Activated CD8-positive, alpha-beta T cell treated with anti-CD3 and anti-CD28 coated beads, Interleukin-2, amount 10 ng/mL, durations not matched to agents 7 days and 5 days (primary cell): ENCODE measurements at regions of chr17 and their contacts with region 1.

Region 1: GRCh38 chr17:32877164-32877764 is 340 bp upstream of the MYO1D start:
- DNase-seq: peak; percentile 92
- ATAC-seq: peak; percentile 97
- H3K4me3 Mint-ChIP-seq: peak overlapping the region; percentile 66
- H3K27ac Mint-ChIP-seq: peak overlapping the region; percentile 78
- H3K4me1 Mint-ChIP-seq: peaks cover 14% of the 10 kb centered on the region
- H3K27me3 Mint-ChIP-seq: peaks cover 41% of the 10 kb centered on the region

Region 2: DNA sequence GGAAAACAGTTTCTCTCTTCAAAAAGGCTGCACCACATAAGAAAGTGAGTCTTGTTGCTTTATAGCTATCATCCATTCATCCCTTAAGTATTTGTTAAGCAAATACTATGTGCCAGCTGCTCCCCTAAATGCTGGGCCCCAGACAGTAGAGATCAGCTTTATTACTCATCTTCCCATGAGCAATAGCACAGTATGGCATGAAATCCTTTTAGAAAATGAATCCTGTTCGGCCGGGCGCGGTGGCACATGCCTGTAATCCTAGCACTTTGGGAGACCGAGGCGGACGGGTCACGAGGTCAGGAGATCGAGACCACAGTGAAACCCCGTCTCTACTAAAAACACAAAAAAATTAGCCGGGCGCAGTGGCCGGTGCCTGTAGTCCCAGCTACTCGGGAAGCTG is 99.8 kb before region 1 on chr17:
- CTCF ChIA-PET with region 1: interaction called, 119 read pairs
- POLR2A ChIA-PET with region 1: no interaction called
- DNase-seq: no peak
- ATAC-seq: no peak
- H3K4me3 Mint-ChIP-seq: no peak overlapping the region
- H3K27ac Mint-ChIP-seq: no peak overlapping the region
- H3K4me1 Mint-ChIP-seq: no peaks in the 10 kb centered on the region
- H3K27me3 Mint-ChIP-seq: no peaks in the 10 kb centered on the region

Region 3: GRCh38 chr17:32801193-32801592 is 76.1 kb before region 1 on chr17:
- CTCF ChIA-PET with region 1: interaction called, 14 read pairs
- POLR2A ChIA-PET with region 1: no interaction called
- DNase-seq: no peak
- ATAC-seq: no peak
- H3K4me3 Mint-ChIP-seq: no peak overlapping the region
- H3K27ac Mint-ChIP-seq: no peak overlapping the region
- H3K4me1 Mint-ChIP-seq: peaks cover 5% of the 10 kb centered on the region
- H3K27me3 Mint-ChIP-seq: peaks cover 6% of the 10 kb centered on the region

Region 4: GRCh38 chr17:32847977-32848376 is 29.3 kb before region 1 on chr17:
- CTCF ChIA-PET with region 1: interaction called, 14 read pairs
- POLR2A ChIA-PET with region 1: no interaction called
- DNase-seq: no peak
- ATAC-seq: no peak
- H3K4me3 Mint-ChIP-seq: no peak overlapping the region
- H3K27ac Mint-ChIP-seq: no peak overlapping the region
- H3K4me1 Mint-ChIP-seq: no peaks in the 10 kb centered on the region
- H3K27me3 Mint-ChIP-seq: peaks cover 18% of the 10 kb centered on the region

Region 5: GRCh38 chr17:32903774-32904673 is 26.8 kb after region 1 on chr17:
- CTCF ChIA-PET with region 1: interaction called, 58 read pairs
- POLR2A ChIA-PET with region 1: no interaction called
- DNase-seq: peak; percentile 39
- ATAC-seq: peak; percentile 53
- H3K4me3 Mint-ChIP-seq: no peak overlapping the region
- H3K27ac Mint-ChIP-seq: no peak overlapping the region
- H3K4me1 Mint-ChIP-seq: peaks cover 20% of the 10 kb centered on the region
- H3K27me3 Mint-ChIP-seq: peaks cover 32% of the 10 kb centered on the region

Region 6: GRCh38 chr17:32915245-32915644 is 38.0 kb after region 1 on chr17:
- CTCF ChIA-PET with region 1: interaction called, 58 read pairs
- POLR2A ChIA-PET with region 1: interaction called, 4 read pairs
- DNase-seq: no peak
- ATAC-seq: no peak
- H3K4me3 Mint-ChIP-seq: no peak overlapping the region
- H3K27ac Mint-ChIP-seq: no peak overlapping the region
- H3K4me1 Mint-ChIP-seq: peaks cover 37% of the 10 kb centered on the region
- H3K27me3 Mint-ChIP-seq: peaks cover 6% of the 10 kb centered on the region